ENCODE measurements at regions of chr17 and their contacts with region 1.

Region 1: GRCh38 chr17:20226814-20227482 is 217.8 kb downstream of the SPECC1 start:
- DNase-seq: peak; percentile 90
- ATAC-seq: peak; percentile 97
- H3K4me3 Mint-ChIP-seq: no peak overlapping the region
- H3K27ac Mint-ChIP-seq: peak overlapping the region; percentile 9
- H3K4me1 Mint-ChIP-seq: peaks cover 26% of the 10 kb centered on the region
- H3K27me3 Mint-ChIP-seq: no peaks in the 10 kb centered on the region

Region 2: GRCh38 chr17:20121359-20122253 is 105.3 kb before region 1 on chr17:
- CTCF ChIA-PET with region 1: interaction called, 28 read pairs
- POLR2A ChIA-PET with region 1: no interaction called
- intact Hi-C with region 1: loop called (anchors 1 kb)
- DNase-seq: peak; percentile 82
- ATAC-seq: peak; percentile 72
- H3K4me3 Mint-ChIP-seq: no peak overlapping the region
- H3K27ac Mint-ChIP-seq: no peak overlapping the region
- H3K4me1 Mint-ChIP-seq: no peaks in the 10 kb centered on the region
- H3K27me3 Mint-ChIP-seq: no peaks in the 10 kb centered on the region

Region 3: GRCh38 chr17:20315821-20316220 is 88.9 kb after region 1 on chr17:
- CTCF ChIA-PET with region 1: interaction called, 22 read pairs
- POLR2A ChIA-PET with region 1: no interaction called
- intact Hi-C with region 1: loop called (anchors 1 kb)
- DNase-seq: no peak
- ATAC-seq: no peak
- H3K4me3 Mint-ChIP-seq: no peak overlapping the region
- H3K27ac Mint-ChIP-seq: no peak overlapping the region
- H3K4me1 Mint-ChIP-seq: peaks cover 2% of the 10 kb centered on the region
- H3K27me3 Mint-ChIP-seq: peaks cover 2% of the 10 kb centered on the region

Region 4: DNA sequence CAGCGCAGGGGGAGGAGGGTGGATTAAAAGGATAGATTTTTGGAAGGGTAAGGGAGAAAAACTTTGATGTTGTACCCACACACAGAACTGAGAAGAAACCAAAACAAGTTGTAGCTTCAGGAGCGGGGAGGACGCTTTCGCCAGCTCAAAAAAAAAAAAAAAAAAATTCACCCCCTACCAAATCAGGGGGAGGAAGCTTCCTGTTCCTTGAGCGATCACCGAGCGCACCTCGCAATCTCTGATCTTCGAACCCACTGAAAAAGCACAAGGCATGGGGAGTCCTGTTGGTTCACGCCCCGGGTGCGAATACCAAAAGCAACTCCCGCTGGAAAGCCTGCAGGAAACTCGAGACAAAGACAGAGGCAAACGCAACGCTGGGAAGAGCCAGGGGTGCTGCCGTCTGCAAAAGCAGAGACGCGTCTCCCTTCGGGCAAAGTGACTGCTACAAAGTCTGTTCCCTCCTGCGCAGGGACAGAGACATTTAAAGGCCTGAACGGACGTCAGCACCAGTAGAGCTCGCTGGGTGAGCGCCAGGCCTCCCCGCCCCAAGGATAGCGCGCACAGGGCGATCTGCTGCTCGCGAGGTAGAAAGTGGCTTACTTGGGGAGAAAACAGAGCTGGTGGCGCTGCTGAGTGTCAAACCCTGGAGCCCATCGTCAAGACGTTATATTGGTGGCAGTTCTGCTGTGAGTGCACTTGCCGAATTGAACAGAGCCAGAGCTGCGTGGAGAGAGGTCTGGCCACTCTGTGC is 625.5 kb after region 1 on chr17:
- CTCF ChIA-PET with region 1: no interaction called
- POLR2A ChIA-PET with region 1: no interaction called
- intact Hi-C with region 1: loop called in 1 of 2 experiments (anchors 10 kb)
- DNase-seq: peak; percentile 46
- ATAC-seq: peak; percentile 55
- H3K4me3 Mint-ChIP-seq: peak overlapping the region; percentile 60
- H3K27ac Mint-ChIP-seq: no peak overlapping the region
- H3K4me1 Mint-ChIP-seq: peaks cover 12% of the 10 kb centered on the region
- H3K27me3 Mint-ChIP-seq: peaks cover 42% of the 10 kb centered on the region